AG04450 (cell line): ENCODE measurements at regions of chr3 and their contacts with region 1.

Region 1: GRCh38 chr3:49021813-49022687 is at the start of gene NDUFAF3:
- DNase-seq: peak; percentile 81
- H3K4me3 ChIP-seq: peak within 1 kb of the TSS; percentile 98
- H3K27ac ChIP-seq: peak within 1 kb of the TSS; percentile 90
- H3K27me3 ChIP-seq: no peaks in the 10 kb centered on the region
- CTCF ChIP-seq: peak; percentile 90
- polyA plus RNA-seq, gene NDUFAF3: 47.0 and 69.2 TPM in 2 replicates

Region 2: DNA sequence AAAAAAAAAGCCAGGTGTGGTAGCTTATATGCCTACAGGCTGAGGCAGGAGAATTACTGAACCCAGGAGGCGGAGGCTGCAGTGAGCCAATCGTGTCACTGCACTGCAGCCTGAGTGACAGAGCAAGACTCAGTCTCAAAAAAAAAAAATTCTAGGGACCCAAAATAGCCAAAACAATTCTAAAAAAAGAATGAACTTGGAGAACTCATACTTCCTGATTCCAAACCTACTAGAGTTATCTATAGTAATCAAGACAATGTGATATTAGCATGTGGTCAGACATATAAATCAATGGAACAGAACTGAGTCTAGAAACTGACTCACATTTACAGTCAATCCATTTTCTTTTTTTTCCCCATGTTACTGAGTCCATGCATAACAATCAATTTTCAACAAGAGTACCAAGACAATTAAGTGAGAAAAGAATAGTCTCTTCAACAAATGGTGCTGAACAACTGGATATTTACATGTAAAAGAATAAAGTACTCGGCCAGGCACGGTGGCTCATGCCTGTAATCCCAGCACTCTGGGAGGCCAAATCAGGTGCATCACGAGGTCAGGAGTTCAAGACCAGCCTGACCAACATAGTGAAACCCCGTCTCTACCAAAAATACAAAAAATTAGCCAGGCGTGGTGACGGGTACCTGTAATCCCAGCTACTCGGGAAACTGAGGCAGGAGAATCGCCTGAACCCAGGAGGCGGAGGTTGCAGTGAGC is 186.2 kb before region 1 on chr3:
- CTCF ChIA-PET with region 1: no interaction called
- POLR2A ChIA-PET with region 1: no interaction called
- DNase-seq: no peak
- H3K4me3 ChIP-seq: no peak overlapping the region
- H3K27ac ChIP-seq: no peak overlapping the region
- H3K27me3 ChIP-seq: no peaks in the 10 kb centered on the region
- CTCF ChIP-seq: no peak

Region 3: GRCh38 chr3:48847504-48848423 is 174.3 kb before region 1 on chr3 and contains the start of gene PRKAR2A:
- CTCF ChIA-PET with region 1: no interaction called
- POLR2A ChIA-PET with region 1: no interaction called
- DNase-seq: peak; percentile 49
- H3K4me3 ChIP-seq: peak within 1 kb of the TSS; percentile 88
- H3K27ac ChIP-seq: peak within 1 kb of the TSS; percentile 65
- H3K27me3 ChIP-seq: no peaks in the 10 kb centered on the region
- CTCF ChIP-seq: no peak
- polyA plus RNA-seq, gene PRKAR2A: 19.6 and 20.7 TPM in 2 replicates

Region 4: DNA sequence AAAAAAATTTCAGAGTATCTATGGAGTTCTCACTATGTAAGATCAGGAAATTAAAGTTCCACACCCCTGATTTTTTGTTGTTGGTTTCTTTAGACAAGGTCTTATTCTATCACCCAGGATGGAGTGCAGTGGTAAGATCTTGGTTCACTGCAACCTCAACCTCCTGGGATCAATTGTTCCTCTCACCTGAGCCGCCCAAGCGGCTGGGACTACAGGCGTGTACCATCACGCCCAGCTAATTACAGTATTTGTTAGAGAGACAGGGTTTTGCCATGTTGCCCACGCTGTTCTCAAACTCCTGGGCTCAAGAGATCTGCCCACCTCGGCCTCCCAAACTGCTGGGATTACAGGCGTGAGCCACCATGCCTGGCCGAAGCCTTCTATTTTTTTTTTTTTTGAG is 59.4 kb after region 1 on chr3:
- CTCF ChIA-PET with region 1: interaction called, 5 read pairs
- POLR2A ChIA-PET with region 1: interaction called, 11 read pairs
- DNase-seq: no peak
- H3K4me3 ChIP-seq: no peak overlapping the region
- H3K27ac ChIP-seq: no peak overlapping the region
- H3K27me3 ChIP-seq: no peaks in the 10 kb centered on the region
- CTCF ChIP-seq: no peak